Activated CD4-positive, alpha-beta T cell treated with anti-CD3 and anti-CD28 coated beads for 36 hours (primary cell): ENCODE measurements at regions of chr18 and their contacts with region 1.

Region 1: DNA sequence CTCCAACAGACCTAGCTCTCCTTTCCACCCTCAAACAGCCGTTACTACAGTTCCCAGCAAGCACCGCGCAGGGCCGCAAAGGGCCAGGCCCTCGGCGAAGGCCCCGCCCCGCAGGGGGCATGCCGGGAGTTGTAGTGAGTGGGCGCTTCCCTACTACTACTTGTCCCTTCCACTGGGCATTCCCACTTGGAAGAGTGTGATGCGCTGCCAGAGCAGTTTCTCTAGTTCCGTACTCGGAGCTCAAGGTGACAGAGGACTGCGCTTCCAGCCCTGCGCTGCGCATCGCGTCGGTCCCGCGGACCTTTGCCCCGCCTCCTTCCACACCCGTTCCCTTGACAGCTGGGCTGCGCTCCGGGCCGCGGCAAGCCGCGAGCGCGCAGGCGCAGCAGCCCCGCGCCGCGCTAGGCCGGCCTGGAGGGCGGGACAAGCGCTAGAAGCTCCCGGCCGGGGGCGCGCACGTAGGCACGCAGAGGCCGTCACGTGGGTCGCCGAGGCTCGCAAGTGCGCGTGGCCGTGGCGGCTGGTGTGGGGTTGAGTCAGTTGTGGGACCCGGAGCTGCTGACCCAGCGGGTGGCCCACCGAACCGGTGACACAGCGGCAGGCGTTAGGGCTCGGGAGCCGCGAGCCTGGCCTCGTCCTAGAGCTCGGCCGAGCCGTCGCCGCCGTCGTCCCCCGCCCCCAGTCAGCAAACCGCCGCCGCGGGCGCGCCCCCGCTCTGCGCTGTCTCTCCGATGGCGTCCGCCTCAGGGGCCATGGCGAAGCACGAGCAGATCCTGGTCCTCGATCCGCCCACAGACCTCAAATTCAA is at the start of gene VAPA:
- DNase-seq: peak; percentile 96
- ATAC-seq: peak; percentile 86
- H3K4me3 Mint-ChIP-seq: peak within 1 kb of the TSS; percentile 89
- H3K27ac Mint-ChIP-seq: peak within 1 kb of the TSS; percentile 93
- H3K4me1 Mint-ChIP-seq: peaks cover 20% of the 10 kb centered on the region
- H3K27me3 Mint-ChIP-seq: peaks cover 5% of the 10 kb centered on the region
- total RNA-seq, gene VAPA: 156 to 220 TPM

Region 2: GRCh38 chr18:9102508-9103375 is 811.0 kb before region 1 on chr18 and contains the start of gene NDUFV2:
- CTCF ChIA-PET with region 1: no interaction called
- POLR2A ChIA-PET with region 1: no interaction called
- intact Hi-C with region 1: loop called (anchors 2 to 10 kb)
- DNase-seq: peak; percentile 99
- ATAC-seq: peak; percentile 88
- H3K4me3 Mint-ChIP-seq: peak within 1 kb of the TSS; percentile 89
- H3K27ac Mint-ChIP-seq: peak within 1 kb of the TSS; percentile 97
- H3K4me1 Mint-ChIP-seq: peaks cover 40% of the 10 kb centered on the region
- H3K27me3 Mint-ChIP-seq: no peaks in the 10 kb centered on the region
- total RNA-seq, gene NDUFV2: 331 to 372 TPM

Region 3: GRCh38 chr18:9552191-9552590 is 361.5 kb before region 1 on chr18:
- CTCF ChIA-PET with region 1: no interaction called
- POLR2A ChIA-PET with region 1: no interaction called
- intact Hi-C with region 1: no loop called
- DNase-seq: no peak
- ATAC-seq: no peak
- H3K4me3 Mint-ChIP-seq: no peak overlapping the region
- H3K27ac Mint-ChIP-seq: no peak overlapping the region
- H3K4me1 Mint-ChIP-seq: no peaks in the 10 kb centered on the region
- H3K27me3 Mint-ChIP-seq: no peaks in the 10 kb centered on the region

Region 4: DNA sequence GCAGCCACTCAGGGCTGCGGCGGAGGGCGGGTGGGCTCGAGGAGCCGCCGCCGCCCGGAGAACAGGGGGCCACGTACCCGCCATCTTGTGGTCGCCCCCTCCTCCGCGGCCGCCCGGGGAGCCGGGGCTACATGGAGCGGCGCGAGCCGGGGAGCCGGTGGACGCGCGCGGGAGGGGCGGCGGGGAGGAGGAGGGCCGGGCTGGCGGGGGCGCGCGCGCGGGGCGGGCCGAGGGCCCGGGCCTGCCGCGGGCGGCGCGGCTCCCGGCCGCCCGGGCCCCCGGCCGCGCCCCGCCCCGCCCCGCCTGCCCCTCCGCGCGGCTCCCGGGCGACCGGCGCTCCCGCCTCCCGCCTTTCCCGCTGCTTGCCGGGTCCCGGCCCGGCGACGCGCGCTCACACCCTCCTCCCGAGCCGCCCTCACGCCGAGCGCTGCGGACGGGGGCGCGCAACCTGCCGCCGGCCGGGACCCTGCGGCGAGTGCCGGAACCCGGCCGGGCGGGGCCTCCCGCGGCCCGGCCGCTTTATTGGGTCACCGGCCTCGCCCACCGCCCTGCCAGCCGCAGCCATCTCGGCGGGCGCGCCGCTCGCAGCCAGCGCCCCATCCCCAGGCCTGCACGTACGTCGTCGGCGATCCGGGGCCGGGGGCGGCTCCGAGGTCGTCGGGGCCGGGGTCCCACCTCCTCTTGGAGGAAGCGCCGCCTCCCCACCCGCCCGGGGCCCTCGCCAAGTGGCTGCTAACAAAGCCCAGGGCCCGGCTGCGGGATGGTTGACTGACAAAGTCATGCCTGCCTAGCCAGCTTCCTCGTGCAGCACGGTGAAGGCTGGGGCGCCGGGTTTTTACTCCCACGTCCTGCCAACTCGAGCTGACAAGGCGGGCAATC is 299.1 kb before region 1 on chr18 and contains the start of gene PPP4R1:
- CTCF ChIA-PET with region 1: no interaction called
- POLR2A ChIA-PET with region 1: interaction called, 4 read pairs
- intact Hi-C with region 1: loop called (anchors 1 to 2 kb)
- DNase-seq: peak; percentile 84
- ATAC-seq: peak; percentile 57
- H3K4me3 Mint-ChIP-seq: peak within 1 kb of the TSS; percentile 93
- H3K27ac Mint-ChIP-seq: peak within 1 kb of the TSS; percentile 79
- H3K4me1 Mint-ChIP-seq: peaks cover 29% of the 10 kb centered on the region
- H3K27me3 Mint-ChIP-seq: no peaks in the 10 kb centered on the region
- total RNA-seq, gene PPP4R1: 32.2 to 33.3 TPM

Region 5: DNA sequence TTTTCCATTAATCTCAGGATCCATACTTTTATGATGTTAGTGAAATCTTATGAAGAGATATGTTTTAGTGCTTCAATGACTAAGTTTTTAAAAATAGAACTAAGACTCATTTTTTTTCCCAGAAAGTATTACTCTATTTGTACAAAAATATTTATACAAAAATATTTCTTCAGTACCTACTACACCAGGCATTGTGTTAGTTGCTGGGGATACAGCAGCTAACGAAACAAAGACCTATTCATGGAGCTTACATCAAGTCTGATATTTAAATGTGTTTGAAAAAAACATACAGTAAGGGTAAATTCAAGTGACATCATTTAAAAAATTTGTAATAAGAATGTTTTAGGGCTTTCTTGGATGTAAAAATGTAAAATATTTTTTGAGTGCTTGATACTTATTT is 11.6 kb after region 1 on chr18:
- CTCF ChIA-PET with region 1: interaction called, 5 read pairs
- POLR2A ChIA-PET with region 1: interaction called, 15 read pairs
- intact Hi-C with region 1: loop called in 1 of 2 experiments (anchors 1 kb)
- DNase-seq: no peak
- ATAC-seq: no peak
- H3K4me3 Mint-ChIP-seq: no peak overlapping the region
- H3K27ac Mint-ChIP-seq: no peak overlapping the region
- H3K4me1 Mint-ChIP-seq: peaks cover 72% of the 10 kb centered on the region
- H3K27me3 Mint-ChIP-seq: no peaks in the 10 kb centered on the region

Region 6: DNA sequence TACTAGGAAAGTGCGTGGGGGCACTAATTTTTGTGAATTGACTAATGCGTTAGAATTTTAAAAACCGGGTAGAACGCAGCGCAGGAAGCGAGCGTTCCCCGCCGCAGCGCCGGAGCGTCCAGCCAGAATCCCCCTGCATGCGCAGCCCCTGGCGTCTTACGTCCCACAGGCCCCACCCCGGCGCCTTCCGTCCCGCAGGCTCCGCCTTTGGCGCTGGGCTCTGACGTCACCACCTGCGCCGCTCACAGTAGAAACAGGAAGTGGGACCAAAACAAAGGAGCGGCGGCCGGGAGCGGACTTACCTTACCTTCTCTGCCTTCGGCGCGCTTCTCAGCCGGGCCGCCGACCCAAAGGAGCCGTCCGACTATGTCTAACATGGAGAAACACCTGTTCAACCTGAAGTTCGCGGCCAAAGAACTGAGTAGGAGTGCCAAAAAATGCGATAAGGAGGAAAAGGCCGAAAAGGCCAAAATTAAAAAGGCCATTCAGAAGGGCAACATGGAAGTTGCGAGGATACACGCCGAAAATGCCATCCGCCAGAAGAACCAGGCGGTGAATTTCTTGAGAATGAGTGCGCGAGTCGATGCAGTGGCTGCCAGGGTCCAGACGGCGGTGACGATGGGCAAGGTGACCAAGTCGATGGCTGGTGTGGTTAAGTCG is 1937.5 kb after region 1 on chr18 and contains the start of gene CHMP1B:
- CTCF ChIA-PET with region 1: no interaction called
- POLR2A ChIA-PET with region 1: no interaction called
- intact Hi-C with region 1: loop called in 1 of 2 experiments (anchors 5 kb)
- DNase-seq: peak; percentile 98
- ATAC-seq: peak; percentile 92
- H3K4me3 Mint-ChIP-seq: peak within 1 kb of the TSS; percentile 91
- H3K27ac Mint-ChIP-seq: peak within 1 kb of the TSS; percentile 99
- H3K4me1 Mint-ChIP-seq: peaks cover 25% of the 10 kb centered on the region
- H3K27me3 Mint-ChIP-seq: no peaks in the 10 kb centered on the region
- total RNA-seq, gene CHMP1B: 20.4 to 20.9 TPM